ENCODE measurements at regions of chr19 and their contacts with region 1.

Region 1: DNA sequence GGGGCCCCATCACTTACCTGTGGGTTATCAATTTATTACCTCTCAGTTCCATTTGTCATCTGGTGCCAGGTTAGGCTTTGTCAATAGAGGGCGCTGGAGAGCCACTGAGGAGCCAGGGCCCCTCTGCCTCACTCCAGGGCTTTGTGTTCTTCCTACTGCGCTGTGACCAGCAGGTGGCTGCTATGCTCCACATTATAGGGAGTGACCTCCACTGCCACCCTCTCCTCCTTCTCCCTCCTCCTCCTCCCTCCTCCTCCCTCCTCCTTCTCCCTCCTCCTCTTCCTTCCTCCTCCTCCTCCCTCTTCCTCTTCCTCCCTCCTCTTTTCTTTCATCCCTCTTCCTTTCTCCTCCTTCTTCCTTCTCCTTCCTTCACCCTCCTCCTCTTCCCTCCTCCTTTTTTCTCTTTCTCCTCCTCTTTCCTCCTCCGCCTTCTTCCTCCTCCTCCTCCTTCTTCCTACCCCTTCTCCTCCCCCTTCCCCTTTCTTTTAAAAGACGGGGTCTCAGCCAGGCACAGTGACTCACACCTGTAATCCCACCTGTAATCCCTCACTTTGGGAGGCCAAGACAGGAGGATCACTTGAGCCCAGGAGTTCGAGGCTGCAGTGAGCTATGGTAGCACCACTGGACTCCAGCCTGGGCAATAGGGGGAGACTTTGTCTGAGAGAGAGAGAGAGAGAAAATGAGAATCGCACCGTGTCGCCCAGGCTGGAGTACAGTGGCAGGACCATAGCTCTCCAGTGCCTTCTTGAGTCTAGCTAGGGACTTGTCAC is 10.3 kb upstream of the ZBTB32 start:
- DNase-seq: peak; percentile 83
- H3K4me3 ChIP-seq: no peak overlapping the region
- H3K27ac ChIP-seq: no peak overlapping the region
- H3K4me1 ChIP-seq: no peaks in the 10 kb centered on the region
- H3K27me3 ChIP-seq: no peaks in the 10 kb centered on the region
- CTCF ChIP-seq: peak; percentile 75 to 97 (median 96)
- POLR2A ChIP-seq: no peak

Region 2: DNA sequence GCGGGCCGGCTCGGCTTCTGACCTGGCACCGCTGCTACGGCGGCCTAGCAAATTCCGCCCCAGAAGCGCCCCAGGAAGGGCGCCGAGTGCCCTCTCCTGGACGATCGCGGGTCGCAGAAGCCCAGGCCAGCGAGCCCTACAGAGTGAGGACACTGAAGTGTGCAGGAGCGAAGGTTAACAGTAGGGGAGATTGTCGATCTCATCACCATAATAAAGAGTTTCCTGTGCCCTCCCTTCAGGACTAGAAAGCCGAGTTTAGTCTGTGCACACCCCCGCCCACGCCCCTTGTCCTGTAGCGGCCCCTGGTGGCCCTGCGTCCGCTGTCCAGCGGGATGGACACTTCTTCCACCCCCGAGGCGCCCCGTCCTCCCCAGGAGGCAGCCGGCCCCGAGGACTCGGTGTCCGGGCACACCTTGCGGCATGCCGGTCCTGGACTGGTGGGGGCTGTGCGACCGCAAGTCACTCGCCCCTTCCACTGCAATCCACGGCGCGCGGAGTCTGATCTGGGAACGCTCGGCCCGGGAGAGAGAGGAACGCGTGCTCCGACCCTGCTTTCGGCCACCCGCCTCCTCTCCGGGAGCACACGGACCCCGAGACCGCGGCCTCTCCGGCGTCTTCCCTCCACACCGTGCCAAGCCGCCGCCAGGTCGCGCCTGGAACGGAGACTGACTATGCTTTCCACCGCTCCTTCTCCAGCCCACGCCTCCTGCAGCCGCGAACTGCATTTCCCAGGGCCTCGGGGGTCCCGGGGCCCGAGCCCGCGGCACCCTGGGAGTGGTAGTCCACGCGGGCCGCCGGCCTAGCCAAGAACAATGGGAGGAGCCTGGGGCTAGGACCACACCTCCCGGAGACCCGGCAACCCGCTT is 23.0 kb after region 1 on chr19:
- intact Hi-C with region 1: loop called (anchors 1 kb)
- DNase-seq: peak; percentile 95
- H3K4me3 ChIP-seq: peak overlapping the region; percentile 91 to 93
- H3K27ac ChIP-seq: peak overlapping the region; percentile 69 to 91
- H3K4me1 ChIP-seq: peaks cover 15% of the 10 kb centered on the region
- H3K27me3 ChIP-seq: no peaks in the 10 kb centered on the region
- CTCF ChIP-seq: peak; percentile 76 to 96 (median 90)
- POLR2A ChIP-seq: peak; percentile 22

Region 3: DNA sequence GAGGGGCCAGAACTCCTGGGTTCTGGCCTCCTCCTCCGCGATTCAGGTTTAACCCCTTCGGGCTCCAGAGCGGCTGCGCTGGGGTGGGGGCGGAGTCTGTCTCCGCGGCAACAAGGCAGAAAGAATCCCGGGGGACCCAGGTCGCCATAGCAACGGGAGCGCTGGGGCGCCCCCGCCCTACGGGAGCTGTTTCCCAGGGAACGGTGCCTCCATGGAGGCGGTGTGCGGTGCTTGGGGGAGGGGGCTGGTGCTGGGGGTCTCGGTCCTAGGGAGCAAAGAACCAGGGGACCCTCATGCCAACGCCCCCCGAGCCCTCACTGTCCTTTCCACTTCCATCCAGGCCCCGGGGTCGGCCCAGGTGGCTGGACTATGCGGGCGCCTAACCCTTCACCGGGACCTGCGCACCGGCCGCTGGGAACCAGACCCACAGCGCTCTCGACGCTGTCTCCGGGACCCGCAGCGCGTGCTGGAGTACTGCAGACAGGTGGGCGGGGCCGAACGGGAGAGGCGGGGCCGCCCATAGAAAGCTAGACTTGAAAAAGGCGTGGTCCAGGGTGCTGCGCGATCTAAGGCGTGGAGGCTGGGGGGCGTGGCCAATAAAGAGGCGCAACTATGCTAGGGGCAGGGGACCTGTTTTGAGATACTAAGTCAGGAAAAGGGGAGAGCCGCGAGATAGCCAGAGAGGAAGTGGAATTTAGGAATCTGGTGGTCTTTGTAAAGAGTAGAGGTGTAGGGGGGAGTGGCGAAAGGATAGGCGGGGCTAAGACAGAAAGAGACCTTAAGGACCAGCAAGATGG is 175.5 kb after region 1 on chr19:
- intact Hi-C with region 1: no loop called
- DNase-seq: peak; percentile 25
- H3K4me3 ChIP-seq: no peak overlapping the region
- H3K27ac ChIP-seq: no peak overlapping the region
- H3K4me1 ChIP-seq: peaks cover 15% of the 10 kb centered on the region
- H3K27me3 ChIP-seq: no peaks in the 10 kb centered on the region
- CTCF ChIP-seq: no peak
- POLR2A ChIP-seq: no peak

Measured in prostate gland (tissue), 2 donors.